ENCODE measurements at regions of chr20 and their contacts with region 1.

Region 1: GRCh38 chr20:330233-331149 is 5.1 kb downstream of the SOX12 start:
- DNase-seq: peak; percentile 86
- H3K4me3 ChIP-seq: no peak overlapping the region
- H3K27ac ChIP-seq: no peak overlapping the region
- H3K4me1 ChIP-seq: peaks cover 24% of the 10 kb centered on the region
- CTCF ChIP-seq: peak; percentile 96

Region 2: DNA sequence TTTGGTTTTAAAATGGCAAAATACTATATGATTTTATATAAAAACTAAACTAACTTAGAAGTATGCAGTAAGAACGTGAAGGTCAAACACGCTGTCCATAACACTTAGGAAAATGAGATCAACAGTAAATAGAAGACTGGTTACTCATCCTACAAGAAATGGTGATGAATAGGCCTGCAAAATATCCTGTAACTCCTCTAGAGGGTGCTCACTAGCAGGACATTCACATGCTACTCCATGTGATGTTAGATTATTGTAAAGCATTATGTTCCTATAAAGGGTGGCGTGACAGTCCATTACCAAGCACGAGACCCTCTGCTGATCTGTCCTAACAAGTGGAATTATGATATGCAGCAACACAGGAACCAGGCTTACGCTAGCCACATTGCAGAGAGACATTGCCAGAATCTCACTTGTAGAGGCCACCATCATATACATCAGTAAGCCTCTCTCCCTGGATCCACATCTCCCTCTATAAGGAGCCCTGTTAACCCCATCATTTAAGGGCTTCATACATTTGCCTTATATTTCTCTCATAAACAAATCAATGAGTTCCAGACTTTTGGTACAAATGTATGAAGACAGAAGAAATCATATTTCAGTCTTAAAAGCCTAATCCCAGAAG is 121.4 kb before region 1 on chr20:
- CTCF ChIA-PET with region 1: no interaction called
- POLR2A ChIA-PET with region 1: no interaction called
- intact Hi-C with region 1: loop called (anchors 1 kb)
- DNase-seq: peak; percentile 53
- H3K4me3 ChIP-seq: no peak overlapping the region
- H3K27ac ChIP-seq: no peak overlapping the region
- H3K4me1 ChIP-seq: no peaks in the 10 kb centered on the region
- CTCF ChIP-seq: peak; percentile 82

Region 3: GRCh38 chr20:381581-382290 is 51.2 kb after region 1 on chr20:
- CTCF ChIA-PET with region 1: no interaction called
- POLR2A ChIA-PET with region 1: no interaction called
- intact Hi-C with region 1: no loop called
- DNase-seq: peak; percentile 92
- H3K4me3 ChIP-seq: peak overlapping the region; percentile 92
- H3K27ac ChIP-seq: peak overlapping the region; percentile 90
- H3K4me1 ChIP-seq: peaks cover 42% of the 10 kb centered on the region
- CTCF ChIP-seq: no peak; the same call in 1 of the 2 replicates

Measured in OCI-LY7 (cell line).